GM12878 (cell line): ENCODE measurements at regions of chr18 and their contacts with region 1.

Region 1: DNA sequence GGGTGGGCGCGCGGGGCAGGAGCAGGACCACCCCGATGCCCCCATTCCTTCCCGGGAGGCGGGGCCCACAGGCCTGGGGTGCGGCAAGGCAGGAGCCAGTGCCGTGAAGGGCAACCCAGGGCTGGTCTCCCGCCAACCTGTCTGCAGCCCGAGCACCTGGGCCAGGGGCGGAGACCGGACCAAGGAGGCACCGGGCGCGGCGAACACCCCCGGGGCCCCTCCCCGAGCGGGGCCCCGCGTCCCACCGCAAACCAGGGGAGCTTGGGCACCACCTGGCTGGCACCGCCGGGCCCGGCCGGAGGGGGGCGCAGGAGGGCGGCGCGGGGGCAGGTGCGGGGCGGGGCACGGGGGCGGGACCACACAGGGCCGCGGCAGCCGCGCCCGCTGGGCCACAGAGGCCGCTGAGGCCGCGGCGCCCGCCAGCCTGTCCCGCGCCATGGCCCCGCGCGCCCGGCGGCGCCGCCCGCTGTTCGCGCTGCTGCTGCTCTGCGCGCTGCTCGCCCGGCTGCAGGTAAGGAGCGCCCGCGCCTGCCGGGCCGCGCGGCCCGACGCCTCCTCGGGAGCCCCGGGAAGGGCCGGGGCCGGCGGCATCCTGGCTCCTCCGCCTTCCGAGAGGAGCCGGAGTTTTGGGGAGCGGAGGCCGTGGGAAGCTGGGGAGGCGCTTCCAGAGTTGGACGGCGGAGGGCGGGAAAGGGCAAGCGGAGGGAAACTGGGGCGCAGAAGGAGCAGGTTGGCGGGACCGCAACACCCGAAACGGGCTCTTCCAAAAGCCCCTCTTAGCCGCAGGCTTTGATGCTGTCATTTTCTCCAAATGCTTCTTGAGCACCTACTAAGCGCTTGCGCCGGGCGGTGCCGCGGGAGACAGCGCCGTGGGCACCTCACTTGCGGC is at the start of gene TNFRSF11A:
- DNase-seq: no peak
- ATAC-seq: peak; percentile 82
- H3K4me3 ChIP-seq: peak within 1 kb of the TSS; percentile 78
- H3K27ac ChIP-seq: no peak within 1 kb of the TSS
- H3K4me1 ChIP-seq: peaks cover 15% of the 10 kb centered on the region
- H3K27me3 ChIP-seq: peaks cover 0 to 13% of the 10 kb centered on the region in 2 experiments; a peak in 1 of 4 replicates
- CTCF ChIP-seq: peak; percentile 20 to 48 (median 47); a peak in 3 of 6 replicates
- EP300 ChIP-seq: no peak
- POLR2A ChIP-seq: no peak
- RAD21 ChIP-seq: peak; percentile 36
- polyA plus RNA-seq, gene TNFRSF11A: 0.07 to 0.10 TPM

Region 2: DNA sequence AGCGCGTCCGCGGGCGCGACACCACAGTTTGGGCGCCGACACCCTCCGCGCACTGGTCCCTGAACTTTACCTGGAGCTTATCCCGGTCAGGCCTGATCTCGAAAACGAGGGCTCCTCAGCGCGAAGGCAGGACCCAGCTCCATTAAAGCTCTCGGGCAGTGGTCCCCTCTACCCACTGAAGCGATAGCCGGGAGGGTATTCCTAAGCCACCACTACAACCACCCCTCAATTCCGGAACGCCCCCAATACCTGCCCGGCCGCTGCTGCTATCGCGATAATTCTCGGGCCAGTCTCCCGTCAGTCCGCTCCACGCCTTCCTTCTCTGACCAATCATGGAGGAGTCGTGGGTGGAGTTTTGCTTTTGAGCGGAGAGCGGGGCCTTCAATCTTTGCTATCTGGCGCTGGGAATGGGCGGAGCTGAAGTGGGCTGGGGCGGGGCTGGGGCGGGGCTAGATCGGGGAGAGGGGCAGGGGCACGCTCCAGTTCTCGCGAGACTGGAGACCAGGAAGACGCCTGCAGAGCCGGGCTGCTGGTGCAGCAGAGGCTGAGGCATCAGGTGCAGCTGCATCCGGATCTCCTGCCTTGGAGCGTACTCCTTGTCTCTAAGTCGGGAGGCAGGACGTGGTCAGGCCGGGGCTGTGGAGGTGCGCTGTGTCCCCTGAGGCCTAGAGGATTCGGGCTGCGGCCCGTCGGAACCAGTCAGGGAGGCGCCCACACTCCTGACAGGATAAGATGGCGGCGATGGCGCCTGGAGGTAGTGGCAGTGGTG is 138.2 kb before region 1 on chr18 and contains the starts of genes PIGN and RELCH:
- CTCF ChIA-PET with region 1: interaction called, 4 read pairs
- POLR2A ChIA-PET with region 1: no interaction called
- RAD21 ChIA-PET with region 1: interaction called, 3 read pairs
- SMC1A ChIA-PET with region 1: no interaction called
- in situ Hi-C with region 1: no loop called
- intact Hi-C with region 1: loop called (anchors 5 kb)
- DNase-seq: peak; percentile 92
- ATAC-seq: peak; percentile 90
- H3K4me3 ChIP-seq: peak within 1 kb of the TSS; percentile 99
- H3K27ac ChIP-seq: peak within 1 kb of the TSS; percentile 91
- H3K4me1 ChIP-seq: peaks cover 3% of the 10 kb centered on the region
- H3K27me3 ChIP-seq: no peaks in the 10 kb centered on the region
- CTCF ChIP-seq: no peak
- EP300 ChIP-seq: no peak
- POLR2A ChIP-seq: peak; percentile 98
- RAD21 ChIP-seq: no peak
- polyA plus RNA-seq, gene PIGN: 6.9 to 12.3 TPM
- polyA plus RNA-seq, gene RELCH: 3.1 to 3.4 TPM

Region 3: GRCh38 chr18:62287781-62288664 is 37.1 kb before region 1 on chr18:
- CTCF ChIA-PET with region 1: interaction called, 4 read pairs
- POLR2A ChIA-PET with region 1: no interaction called
- RAD21 ChIA-PET with region 1: no interaction called
- SMC1A ChIA-PET with region 1: interaction called, 5 read pairs
- in situ Hi-C with region 1: no loop called
- intact Hi-C with region 1: loop called (anchors 5 kb)
- DNase-seq: no peak
- ATAC-seq: peak; percentile 69
- H3K4me3 ChIP-seq: no peak overlapping the region
- H3K27ac ChIP-seq: peak overlapping the region; percentile 58; the same call in 1 of the 2 replicates
- H3K4me1 ChIP-seq: peaks cover 17% of the 10 kb centered on the region
- H3K27me3 ChIP-seq: no peaks in the 10 kb centered on the region
- CTCF ChIP-seq: no peak
- EP300 ChIP-seq: 0 out of 4 replicates have a peak, but pooled peaks of 1 of the 2 experiments have one; percentile 11
- POLR2A ChIP-seq: no peak
- RAD21 ChIP-seq: no peak

Region 4: GRCh38 chr18:62312851-62313250 is 12.3 kb before region 1 on chr18:
- CTCF ChIA-PET with region 1: interaction called, 21 read pairs
- POLR2A ChIA-PET with region 1: no interaction called
- RAD21 ChIA-PET with region 1: interaction called, 5 read pairs
- SMC1A ChIA-PET with region 1: interaction called, 3 read pairs
- in situ Hi-C with region 1: no loop called
- intact Hi-C with region 1: no loop called
- DNase-seq: no peak
- ATAC-seq: no peak; the same call in 2 of the 3 replicates
- H3K4me3 ChIP-seq: no peak overlapping the region
- H3K27ac ChIP-seq: no peak overlapping the region
- H3K4me1 ChIP-seq: no peaks in the 10 kb centered on the region
- H3K27me3 ChIP-seq: no peaks in the 10 kb centered on the region
- CTCF ChIP-seq: no peak
- EP300 ChIP-seq: no peak
- POLR2A ChIP-seq: no peak
- RAD21 ChIP-seq: no peak

Region 5: DNA sequence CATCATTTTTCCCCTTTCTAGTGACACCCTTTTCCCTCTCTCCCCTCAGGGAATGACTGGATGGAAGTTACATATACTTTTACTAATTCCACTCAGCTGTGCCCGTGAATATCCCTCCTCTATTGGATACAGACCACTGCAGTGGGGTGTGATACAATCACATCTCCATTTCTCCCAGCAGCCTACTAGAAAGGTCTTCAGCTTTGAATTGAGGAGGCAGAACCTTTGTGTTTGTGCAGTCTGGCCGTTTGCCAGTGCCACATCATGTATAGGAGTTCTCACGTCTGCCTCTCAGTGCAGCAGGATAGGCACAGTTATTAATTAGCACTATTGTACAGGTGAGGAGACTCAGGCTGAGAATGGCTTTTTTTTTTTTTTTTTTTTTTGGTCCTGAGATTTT is 16.3 kb after region 1 on chr18:
- CTCF ChIA-PET with region 1: interaction called, 10 read pairs
- POLR2A ChIA-PET with region 1: no interaction called
- RAD21 ChIA-PET with region 1: interaction called, 4 read pairs
- SMC1A ChIA-PET with region 1: interaction called, 3 read pairs
- in situ Hi-C with region 1: no loop called
- intact Hi-C with region 1: no loop called
- DNase-seq: no peak
- ATAC-seq: no peak
- H3K4me3 ChIP-seq: no peak overlapping the region
- H3K27ac ChIP-seq: no peak overlapping the region
- H3K4me1 ChIP-seq: no peaks in the 10 kb centered on the region
- H3K27me3 ChIP-seq: no peaks in the 10 kb centered on the region
- CTCF ChIP-seq: no peak
- EP300 ChIP-seq: no peak
- POLR2A ChIP-seq: no peak
- RAD21 ChIP-seq: no peak

Region 6: GRCh38 chr18:62372156-62372555 is 47.0 kb after region 1 on chr18:
- CTCF ChIA-PET with region 1: interaction called, 3 read pairs
- POLR2A ChIA-PET with region 1: no interaction called
- RAD21 ChIA-PET with region 1: no interaction called
- SMC1A ChIA-PET with region 1: interaction called, 5 read pairs
- in situ Hi-C with region 1: no loop called
- intact Hi-C with region 1: loop called (anchors 2 kb)
- DNase-seq: peak; percentile 79
- ATAC-seq: peak; percentile 81
- H3K4me3 ChIP-seq: no peak overlapping the region
- H3K27ac ChIP-seq: no peak overlapping the region
- H3K4me1 ChIP-seq: peaks cover 6% of the 10 kb centered on the region
- H3K27me3 ChIP-seq: no peaks in the 10 kb centered on the region
- CTCF ChIP-seq: no peak
- EP300 ChIP-seq: peak; percentile 91 to 93
- POLR2A ChIP-seq: no peak
- RAD21 ChIP-seq: no peak

Region 7: GRCh38 chr18:62522504-62523254 is 197.5 kb after region 1 on chr18 and contains the start of gene ZCCHC2:
- CTCF ChIA-PET with region 1: no interaction called
- POLR2A ChIA-PET with region 1: interaction called, 3 read pairs
- RAD21 ChIA-PET with region 1: no interaction called
- SMC1A ChIA-PET with region 1: no interaction called
- in situ Hi-C with region 1: no loop called
- intact Hi-C with region 1: loop called (anchors 5 kb)
- DNase-seq: peak; percentile 90
- ATAC-seq: peak; percentile 75
- H3K4me3 ChIP-seq: peak within 1 kb of the TSS; percentile 74
- H3K27ac ChIP-seq: peak within 1 kb of the TSS; percentile 66
- H3K4me1 ChIP-seq: no peaks in the 10 kb centered on the region
- H3K27me3 ChIP-seq: peaks cover 0 to 3% of the 10 kb centered on the region in 2 experiments; a peak in 2 of 4 replicates
- CTCF ChIP-seq: no peak
- EP300 ChIP-seq: no peak
- POLR2A ChIP-seq: peak; percentile 90
- RAD21 ChIP-seq: no peak
- polyA plus RNA-seq, gene ZCCHC2: 1.7 to 2.7 TPM